Activated CD8-positive, alpha-beta T cell treated with anti-CD3 and anti-CD28 coated beads for 36 hours (primary cell): ENCODE measurements at regions of chr19 and their contacts with region 1.

Region 1: GRCh38 chr19:19554074-19555023 is 16.3 kb downstream of the CILP2 start:
- DNase-seq: peak; percentile 76
- ATAC-seq: peak; percentile 80
- H3K4me3 Mint-ChIP-seq: no peak overlapping the region
- H3K27ac Mint-ChIP-seq: no peak overlapping the region
- H3K4me1 Mint-ChIP-seq: no peaks in the 10 kb centered on the region
- H3K27me3 Mint-ChIP-seq: no peaks in the 10 kb centered on the region
- CTCF ChIP-seq: peak; percentile 94

Region 2: GRCh38 chr19:19444681-19445155 is 109.6 kb before region 1 on chr19:
- CTCF ChIA-PET with region 1: no interaction called
- POLR2A ChIA-PET with region 1: no interaction called
- intact Hi-C with region 1: no loop called
- DNase-seq: peak; percentile 46
- ATAC-seq: peak; percentile 17
- H3K4me3 Mint-ChIP-seq: no peak overlapping the region
- H3K27ac Mint-ChIP-seq: peak overlapping the region; percentile 72
- H3K4me1 Mint-ChIP-seq: peaks cover 73% of the 10 kb centered on the region
- H3K27me3 Mint-ChIP-seq: no peaks in the 10 kb centered on the region
- CTCF ChIP-seq: no peak

Region 3: GRCh38 chr19:19540715-19541440 is 13.5 kb before region 1 on chr19:
- CTCF ChIA-PET with region 1: interaction called, 22 read pairs
- POLR2A ChIA-PET with region 1: interaction called, 5 read pairs
- intact Hi-C with region 1: no loop called
- DNase-seq: peak; percentile 90
- ATAC-seq: peak; percentile 90
- H3K4me3 Mint-ChIP-seq: peak overlapping the region; percentile 69
- H3K27ac Mint-ChIP-seq: peak overlapping the region; percentile 59
- H3K4me1 Mint-ChIP-seq: peaks cover 30% of the 10 kb centered on the region
- H3K27me3 Mint-ChIP-seq: peaks cover 6% of the 10 kb centered on the region
- CTCF ChIP-seq: no peak

Region 4: DNA sequence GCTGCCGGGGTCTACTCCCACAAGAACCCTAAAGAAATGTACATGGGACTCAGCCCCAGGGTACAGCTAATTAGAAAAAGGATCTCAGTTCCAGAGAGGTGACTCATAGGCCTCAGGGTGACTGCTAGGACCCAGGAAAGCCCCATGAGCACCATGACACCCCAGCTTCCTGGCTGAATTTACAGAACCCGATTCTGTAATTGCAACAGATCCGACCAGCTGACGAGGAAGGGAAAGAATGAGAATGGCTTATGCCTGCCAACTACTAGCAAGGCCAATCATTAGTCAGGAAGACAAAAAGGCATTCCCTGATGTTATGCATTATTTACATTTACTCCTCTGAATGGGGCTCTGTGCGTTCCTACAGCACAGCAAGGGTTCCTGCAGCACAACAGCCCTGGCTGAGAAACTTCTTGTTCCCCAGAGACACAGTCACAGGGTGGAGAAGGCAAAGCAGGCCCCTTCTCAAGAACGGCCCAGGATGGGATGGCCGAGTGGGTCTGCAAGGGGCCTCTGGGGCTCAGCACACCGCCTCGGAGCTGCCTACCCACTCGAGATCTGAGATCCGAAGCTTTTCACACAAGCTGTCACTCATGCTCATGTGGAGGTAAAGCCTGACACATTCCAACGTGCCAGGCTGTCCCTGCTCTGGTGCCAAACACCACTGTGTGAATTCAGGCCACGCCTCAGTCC is 36.9 kb after region 1 on chr19:
- CTCF ChIA-PET with region 1: interaction called, 32 read pairs
- POLR2A ChIA-PET with region 1: no interaction called
- intact Hi-C with region 1: no loop called
- DNase-seq: peak; percentile 86
- ATAC-seq: peak; percentile 90
- H3K4me3 Mint-ChIP-seq: peak overlapping the region; percentile 47
- H3K27ac Mint-ChIP-seq: peak overlapping the region; percentile 93
- H3K4me1 Mint-ChIP-seq: peaks cover 60% of the 10 kb centered on the region
- H3K27me3 Mint-ChIP-seq: no peaks in the 10 kb centered on the region
- CTCF ChIP-seq: no peak

Region 5: GRCh38 chr19:19619849-19620210 is 65.5 kb after region 1 on chr19:
- CTCF ChIA-PET with region 1: interaction called, 13 read pairs
- POLR2A ChIA-PET with region 1: no interaction called
- intact Hi-C with region 1: no loop called
- DNase-seq: no peak
- ATAC-seq: no peak
- H3K4me3 Mint-ChIP-seq: no peak overlapping the region
- H3K27ac Mint-ChIP-seq: no peak overlapping the region
- H3K4me1 Mint-ChIP-seq: peaks cover 35% of the 10 kb centered on the region
- H3K27me3 Mint-ChIP-seq: no peaks in the 10 kb centered on the region
- CTCF ChIP-seq: no peak